ENCODE measurements at regions of chr5 and their contacts with region 1.

Region 1: GRCh38 chr5:177390363-177391300 is 6.4 kb downstream of the SLC34A1 start:
- DNase-seq: peak; percentile 96

Region 2: GRCh38 chr5:177094224-177095087 is 296.2 kb before region 1 on chr5:
- CTCF ChIA-PET with region 1: no interaction called
- POLR2A ChIA-PET with region 1: no interaction called
- DNase-seq: no peak

Region 3: GRCh38 chr5:177370488-177371119 is 20.0 kb before region 1 on chr5:
- CTCF ChIA-PET with region 1: interaction called, 12 read pairs
- POLR2A ChIA-PET with region 1: interaction called, 5 read pairs
- DNase-seq: peak; percentile 97

Region 4: DNA sequence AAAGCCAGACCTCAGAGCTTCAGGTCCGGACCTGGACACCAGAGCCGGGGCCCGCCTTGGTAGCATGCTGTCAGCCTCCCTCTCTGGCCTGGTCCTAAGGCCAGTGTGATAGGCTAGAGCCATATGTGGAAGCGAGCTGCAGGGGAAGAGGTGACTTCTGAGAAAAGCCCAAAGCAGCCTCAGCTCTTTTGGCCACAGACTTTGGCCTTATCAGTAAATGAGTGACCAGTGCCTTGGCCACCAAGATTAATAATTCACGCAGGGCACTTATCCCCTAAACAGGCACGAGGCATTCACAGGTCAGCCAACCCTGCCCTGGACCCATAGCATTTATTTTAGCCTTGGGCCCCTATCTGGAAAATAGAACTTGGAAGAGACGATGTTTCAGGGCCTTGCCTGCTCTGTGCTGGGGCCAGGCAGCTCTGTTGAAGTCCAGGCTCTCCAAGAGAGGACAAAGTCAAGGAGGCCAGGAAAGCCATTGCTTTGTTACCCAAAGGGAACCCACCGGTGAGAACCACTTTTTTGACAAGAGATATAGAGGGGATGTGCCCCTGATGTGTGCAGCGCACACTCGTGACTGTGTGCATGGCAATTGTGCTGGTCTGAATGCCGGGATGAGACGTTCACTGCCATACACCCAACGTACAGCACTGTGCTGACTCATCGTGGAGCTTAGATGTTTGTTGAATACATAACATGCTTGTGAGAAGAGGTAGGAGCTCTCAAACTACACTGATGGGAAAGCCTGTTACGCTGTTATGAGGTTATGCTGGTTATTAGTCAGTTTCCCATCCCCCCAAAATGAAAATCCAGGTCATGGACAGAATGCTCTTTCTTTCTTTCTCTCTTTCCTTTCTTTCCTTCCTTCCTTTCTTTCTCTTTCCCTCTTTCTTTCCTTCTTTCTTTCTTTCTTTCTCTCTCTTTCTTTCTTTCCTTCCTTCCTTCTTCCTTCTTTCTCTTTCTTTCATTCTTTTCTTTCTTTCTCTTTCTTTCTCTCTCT is 11.4 kb before region 1 on chr5:
- CTCF ChIA-PET with region 1: interaction called, 18 read pairs
- POLR2A ChIA-PET with region 1: interaction called, 3 read pairs
- DNase-seq: no peak

Region 5: GRCh38 chr5:177446200-177447065 is 55.8 kb after region 1 on chr5 and contains the start of gene PRR7:
- CTCF ChIA-PET with region 1: interaction called, 15 read pairs
- POLR2A ChIA-PET with region 1: interaction called, 11 read pairs
- DNase-seq: peak; percentile 81

Region 6: DNA sequence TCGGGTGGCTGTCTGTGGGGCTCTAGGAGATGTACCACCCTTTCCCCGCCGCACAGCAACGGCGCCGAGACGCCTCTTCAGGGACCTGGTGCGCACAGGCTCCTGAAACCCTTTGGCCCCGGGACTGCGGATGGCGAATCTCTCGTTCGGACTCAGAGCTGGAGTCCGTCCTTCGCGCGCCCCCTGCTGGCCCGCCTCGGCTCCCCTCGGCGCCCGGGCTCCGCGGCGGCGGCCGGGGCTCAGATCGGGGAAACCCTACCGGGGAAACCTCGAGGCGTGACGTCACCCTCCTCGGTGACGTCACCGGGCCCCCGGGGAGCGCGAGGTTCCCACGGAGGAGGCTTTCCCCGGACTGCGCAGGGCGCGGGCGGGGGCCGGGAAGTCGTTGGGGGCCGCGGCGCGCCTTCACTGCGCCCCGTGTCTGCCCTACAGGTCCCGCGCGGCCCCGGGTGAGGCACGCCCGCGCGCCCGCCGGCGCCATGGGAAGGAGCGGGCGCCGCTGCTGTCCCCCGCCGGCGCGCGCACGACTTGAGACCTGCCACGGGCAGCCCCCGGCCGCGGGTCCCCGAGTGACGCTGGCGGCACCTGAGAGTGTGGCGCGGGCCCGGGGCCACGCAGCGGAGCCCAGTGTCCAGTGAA is 63.9 kb after region 1 on chr5:
- CTCF ChIA-PET with region 1: interaction called, 38 read pairs
- POLR2A ChIA-PET with region 1: interaction called, 15 read pairs
- DNase-seq: peak; percentile 96

Measured in HEK293T (cell line).